Right cardiac atrium (tissue), 5 donors: ENCODE measurements at regions of chr1 and their contacts with region 1.

Region 1: GRCh38 chr1:167128261-167129227 is 34.7 kb downstream of the STYXL2 start:
- DNase-seq: peak in 1 of 3 donors; percentile 39
- ATAC-seq: no peak
- H3K4me3 ChIP-seq: no peak overlapping the region
- H3K27ac ChIP-seq: no peak overlapping the region
- H3K4me1 ChIP-seq: no peaks in the 10 kb centered on the region
- H3K27me3 ChIP-seq: no peaks in the 10 kb centered on the region

Region 2: GRCh38 chr1:167076136-167076710 is 52.3 kb before region 1 on chr1:
- intact Hi-C with region 1: loop called in 1 of 4 experiments (anchors 5 kb)
- DNase-seq: no peak
- ATAC-seq: no peak
- H3K4me3 ChIP-seq: no peak overlapping the region
- H3K27ac ChIP-seq: no peak overlapping the region
- H3K4me1 ChIP-seq: no peaks in the 10 kb centered on the region
- H3K27me3 ChIP-seq: no peaks in the 10 kb centered on the region

Region 3: GRCh38 chr1:167332503-167332902 is 204.0 kb after region 1 on chr1:
- intact Hi-C with region 1: no loop called
- DNase-seq: no peak
- ATAC-seq: no peak
- H3K4me3 ChIP-seq: no peak overlapping the region
- H3K27ac ChIP-seq: no peak overlapping the region
- H3K4me1 ChIP-seq: no peaks in the 10 kb centered on the region
- H3K27me3 ChIP-seq: no peaks in the 10 kb centered on the region